ENCODE measurements at regions of chr19 and their contacts with region 1.

Region 1: GRCh38 chr19:42244347-42245220 is 2.2 kb upstream of the GSK3A start:
- DNase-seq: peak; percentile 94 to 97 (median 96)
- ATAC-seq: peak; percentile 40 to 48
- H3K4me3 ChIP-seq: peak overlapping the region; percentile 77
- H3K27ac ChIP-seq: peak overlapping the region; percentile 90
- H3K4me1 ChIP-seq: peaks cover 5% of the 10 kb centered on the region
- H3K27me3 ChIP-seq: no peaks in the 10 kb centered on the region

Region 2: GRCh38 chr19:42199440-42200115 is 45.0 kb before region 1 on chr19:
- intact Hi-C with region 1: no loop called
- DNase-seq: peak; percentile 60 to 86 (median 78)
- ATAC-seq: peak; percentile 58 to 61
- H3K4me3 ChIP-seq: no peak overlapping the region
- H3K27ac ChIP-seq: no peak overlapping the region
- H3K4me1 ChIP-seq: peaks cover 4% of the 10 kb centered on the region
- H3K27me3 ChIP-seq: no peaks in the 10 kb centered on the region

Region 3: GRCh38 chr19:42283143-42284065 is 38.8 kb after region 1 on chr19:
- intact Hi-C with region 1: loop called in 3 of 4 experiments (anchors 5 kb)
- DNase-seq: peak; percentile 97 to 99 (median 99)
- ATAC-seq: peak; percentile 58 to 71
- H3K4me3 ChIP-seq: peak overlapping the region; percentile 74
- H3K27ac ChIP-seq: peak overlapping the region; percentile 85
- H3K4me1 ChIP-seq: peaks cover 34% of the 10 kb centered on the region
- H3K27me3 ChIP-seq: no peaks in the 10 kb centered on the region

Region 4: DNA sequence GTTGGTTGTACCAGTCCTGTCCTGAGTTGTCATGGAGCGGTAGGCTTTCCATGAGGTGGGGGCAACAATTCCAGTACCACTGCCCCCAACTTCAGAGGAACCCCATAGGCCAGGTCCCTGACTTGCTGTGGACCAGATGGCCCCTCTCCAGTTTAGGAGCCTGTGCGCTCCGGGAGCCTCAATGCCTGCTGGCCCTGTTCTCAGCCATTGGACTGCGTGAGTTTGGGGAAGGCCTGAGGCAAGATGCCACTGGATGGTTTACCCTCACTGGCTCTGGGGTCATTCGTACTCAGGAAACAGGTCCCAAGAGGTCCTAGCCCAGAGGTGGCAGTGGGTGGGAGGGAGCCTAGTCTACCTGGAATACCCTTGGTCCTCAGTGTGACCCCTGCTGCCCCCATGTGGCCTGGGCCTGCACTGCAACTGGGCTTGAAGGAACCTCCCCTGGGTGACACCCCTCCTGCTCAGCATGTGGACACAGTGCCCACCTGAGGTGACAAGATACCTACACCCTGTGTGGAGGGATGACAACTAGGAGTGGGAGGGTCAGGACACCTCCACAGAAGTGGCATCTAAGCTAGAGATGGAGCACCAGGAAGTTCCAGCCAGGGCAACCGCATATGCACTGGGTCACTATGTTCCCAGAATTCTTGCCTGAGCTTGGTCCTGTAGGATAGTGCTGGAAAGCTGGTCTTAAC is 51.4 kb after region 1 on chr19:
- intact Hi-C with region 1: loop called in 1 of 4 experiments (anchors 5 kb)
- DNase-seq: peak; percentile 74 to 94 (median 94)
- ATAC-seq: peak; percentile 71 to 73
- H3K4me3 ChIP-seq: no peak overlapping the region
- H3K27ac ChIP-seq: no peak overlapping the region
- H3K4me1 ChIP-seq: no peaks in the 10 kb centered on the region
- H3K27me3 ChIP-seq: no peaks in the 10 kb centered on the region